A673 (cell line): ENCODE measurements at regions of chr9 and their contacts with region 1.

Region 1: DNA sequence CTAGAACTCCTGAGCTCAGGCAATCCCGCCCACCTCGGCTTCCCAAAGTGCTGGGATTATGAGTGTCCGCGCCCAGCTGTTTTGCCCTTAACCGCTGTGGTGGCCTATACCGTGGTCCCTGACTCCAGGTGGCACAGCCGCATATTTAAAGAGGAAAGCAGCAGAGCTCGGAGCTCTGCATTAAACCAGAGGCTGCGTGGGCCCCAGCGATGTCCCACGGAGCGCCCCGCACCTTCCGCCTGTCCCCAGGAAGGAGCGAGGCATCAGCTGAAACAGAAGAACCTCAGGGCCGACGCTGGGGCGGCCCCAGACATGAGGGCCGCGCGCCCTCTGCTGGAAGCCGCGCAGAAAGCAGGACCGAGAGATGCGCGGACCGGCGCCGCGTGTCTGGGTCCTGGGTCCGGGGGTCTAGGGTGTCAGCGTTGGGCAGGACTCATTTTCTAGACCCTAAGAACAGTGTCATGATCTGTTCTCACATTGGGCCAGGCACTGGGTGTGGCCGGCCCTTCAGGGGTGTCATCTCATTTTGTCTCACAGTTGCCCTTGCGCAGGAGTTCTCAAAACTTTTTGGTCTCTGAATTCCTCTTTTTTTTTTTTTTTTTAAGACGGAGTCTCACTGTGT is 37.7 kb downstream of the LAMC3 start:
- DNase-seq: peak; percentile 82
- H3K4me3 ChIP-seq: no peak overlapping the region
- H3K27ac ChIP-seq: no peak overlapping the region
- H3K4me1 ChIP-seq: no peaks in the 10 kb centered on the region
- H3K27me3 ChIP-seq: no peaks in the 10 kb centered on the region
- CTCF ChIP-seq: peak; percentile 97

Region 2: GRCh38 chr9:130254752-130255630 is 791.7 kb before region 1 on chr9:
- CTCF ChIA-PET with region 1: no interaction called
- POLR2A ChIA-PET with region 1: no interaction called
- intact Hi-C with region 1: no loop called
- DNase-seq: no peak
- H3K4me3 ChIP-seq: no peak overlapping the region
- H3K27ac ChIP-seq: no peak overlapping the region
- H3K4me1 ChIP-seq: no peaks in the 10 kb centered on the region
- H3K27me3 ChIP-seq: no peaks in the 10 kb centered on the region
- CTCF ChIP-seq: no peak

Region 3: GRCh38 chr9:130461218-130461630 is 585.5 kb before region 1 on chr9:
- CTCF ChIA-PET with region 1: no interaction called
- POLR2A ChIA-PET with region 1: interaction called, 11 read pairs
- intact Hi-C with region 1: no loop called
- DNase-seq: peak; percentile 75
- H3K4me3 ChIP-seq: no peak overlapping the region
- H3K27ac ChIP-seq: no peak overlapping the region
- H3K4me1 ChIP-seq: no peaks in the 10 kb centered on the region
- H3K27me3 ChIP-seq: no peaks in the 10 kb centered on the region
- CTCF ChIP-seq: peak; percentile 86

Region 4: GRCh38 chr9:130770679-130771442 is 275.8 kb before region 1 on chr9:
- CTCF ChIA-PET with region 1: no interaction called
- POLR2A ChIA-PET with region 1: no interaction called
- intact Hi-C with region 1: loop called (anchors 5 kb)
- DNase-seq: peak; percentile 84
- H3K4me3 ChIP-seq: no peak overlapping the region
- H3K27ac ChIP-seq: no peak overlapping the region
- H3K4me1 ChIP-seq: no peaks in the 10 kb centered on the region
- H3K27me3 ChIP-seq: no peaks in the 10 kb centered on the region
- CTCF ChIP-seq: peak; percentile 73

Region 5: DNA sequence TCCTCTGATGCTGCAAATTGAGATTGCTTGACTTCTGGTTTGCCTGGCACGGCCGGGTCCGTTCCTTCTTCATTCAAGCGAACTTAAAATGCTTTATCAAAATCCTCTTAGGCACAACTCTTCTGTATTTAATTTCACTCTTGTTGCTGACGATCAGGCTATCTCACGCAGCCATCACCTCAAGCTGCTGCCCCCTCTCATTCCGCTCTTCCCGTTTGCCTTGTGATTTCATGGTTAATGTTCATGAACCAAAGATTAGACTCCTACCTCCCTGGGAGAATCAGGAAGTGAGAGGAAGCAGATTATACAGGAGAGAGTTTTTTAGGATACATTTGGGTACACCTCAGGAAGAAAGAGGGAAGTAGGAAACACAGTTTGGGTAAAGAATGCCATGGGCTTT is 172.7 kb before region 1 on chr9:
- CTCF ChIA-PET with region 1: interaction called, 6 read pairs
- POLR2A ChIA-PET with region 1: interaction called, 12 read pairs
- intact Hi-C with region 1: no loop called
- DNase-seq: no peak
- H3K4me3 ChIP-seq: no peak overlapping the region
- H3K27ac ChIP-seq: no peak overlapping the region
- H3K4me1 ChIP-seq: peaks cover 14% of the 10 kb centered on the region
- H3K27me3 ChIP-seq: no peaks in the 10 kb centered on the region
- CTCF ChIP-seq: no peak

Region 6: DNA sequence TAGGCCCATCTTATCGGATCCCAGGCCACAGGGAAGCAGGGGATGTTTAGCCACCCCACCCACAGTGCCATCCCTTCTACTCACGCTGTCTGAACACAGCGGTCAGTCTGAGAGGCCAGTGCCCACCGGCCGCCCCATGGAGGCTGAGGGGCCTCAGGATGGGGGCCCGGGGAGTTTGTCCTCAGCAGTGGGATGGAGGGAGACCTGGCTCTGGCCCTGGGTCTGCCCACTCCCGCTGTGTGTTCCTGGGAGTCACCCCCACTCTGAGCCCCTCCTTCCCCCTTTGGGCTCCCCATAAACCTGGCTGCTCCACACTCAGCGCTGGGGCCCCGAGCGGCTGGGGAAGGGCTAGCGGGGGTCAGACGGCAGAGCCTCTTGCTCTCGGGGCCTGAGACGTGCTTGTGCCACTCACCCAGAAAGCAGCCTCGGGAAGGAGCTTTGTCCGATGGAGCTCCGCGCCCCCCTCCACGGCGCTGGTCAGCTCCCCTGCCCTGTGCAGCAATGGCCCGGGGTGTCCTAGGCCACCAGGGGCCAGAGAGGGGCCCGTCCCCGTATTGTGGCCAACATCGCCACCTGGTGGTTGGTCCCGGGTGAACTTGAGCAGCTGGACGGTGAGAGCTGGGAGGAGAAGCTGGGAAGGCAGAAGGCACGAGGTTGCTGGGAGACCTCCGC is 48.6 kb before region 1 on chr9:
- CTCF ChIA-PET with region 1: interaction called, 4 read pairs
- POLR2A ChIA-PET with region 1: no interaction called
- intact Hi-C with region 1: loop called (anchors 2 kb)
- DNase-seq: peak; percentile 72
- H3K4me3 ChIP-seq: no peak overlapping the region
- H3K27ac ChIP-seq: no peak overlapping the region
- H3K4me1 ChIP-seq: peaks cover 5% of the 10 kb centered on the region
- H3K27me3 ChIP-seq: peaks cover 7% of the 10 kb centered on the region
- CTCF ChIP-seq: peak; percentile 83

Region 7: DNA sequence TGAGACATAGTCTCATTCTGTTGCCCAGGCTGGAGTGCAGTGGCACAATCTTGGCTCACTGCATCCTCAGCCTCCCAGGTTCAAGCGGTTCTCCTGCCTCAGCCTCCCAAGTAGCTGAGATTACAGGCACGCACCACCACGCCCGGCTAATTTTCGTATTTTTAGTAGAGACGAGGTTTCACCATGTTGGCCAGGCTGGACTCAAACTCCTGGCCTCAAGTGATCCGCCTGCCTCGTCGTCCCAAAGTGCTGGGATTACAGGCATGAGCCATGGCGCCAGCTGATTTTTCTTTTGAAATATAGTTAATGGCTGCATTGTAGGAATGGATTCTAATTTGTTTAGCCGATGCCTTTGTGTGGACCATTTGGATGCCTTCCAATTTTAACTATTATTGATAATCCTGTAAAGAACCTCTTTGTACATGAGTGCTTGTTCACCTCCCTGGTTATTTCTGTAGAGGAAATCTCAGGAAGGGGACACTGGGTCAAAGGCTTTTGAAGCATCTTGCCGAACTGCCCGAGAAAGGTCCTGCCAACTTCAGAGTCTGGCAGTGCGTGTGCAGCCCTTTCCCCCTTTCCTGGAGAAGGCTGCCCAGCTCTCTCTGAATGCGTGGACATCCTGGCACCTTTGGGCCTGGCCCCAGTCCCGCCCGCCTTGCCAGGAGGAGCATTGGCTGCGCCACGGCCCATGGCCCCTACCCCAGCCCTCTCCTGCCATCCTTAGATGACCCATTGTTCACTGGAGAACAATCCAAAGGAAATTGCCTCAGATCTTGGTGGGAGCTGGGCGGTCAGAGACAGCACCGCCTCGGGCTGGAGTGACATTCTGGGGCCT is 69.8 kb after region 1 on chr9:
- CTCF ChIA-PET with region 1: no interaction called
- POLR2A ChIA-PET with region 1: no interaction called
- intact Hi-C with region 1: no loop called
- DNase-seq: no peak
- H3K4me3 ChIP-seq: no peak overlapping the region
- H3K27ac ChIP-seq: no peak overlapping the region
- H3K4me1 ChIP-seq: no peaks in the 10 kb centered on the region
- H3K27me3 ChIP-seq: no peaks in the 10 kb centered on the region
- CTCF ChIP-seq: no peak

Region 8: GRCh38 chr9:131178382-131178781 is 131.7 kb after region 1 on chr9:
- CTCF ChIA-PET with region 1: no interaction called
- POLR2A ChIA-PET with region 1: no interaction called
- intact Hi-C with region 1: loop called (anchors 10 kb)
- DNase-seq: peak; percentile 77
- H3K4me3 ChIP-seq: no peak overlapping the region
- H3K27ac ChIP-seq: no peak overlapping the region
- H3K4me1 ChIP-seq: no peaks in the 10 kb centered on the region
- H3K27me3 ChIP-seq: no peaks in the 10 kb centered on the region
- CTCF ChIP-seq: peak; percentile 95